ENCODE measurements at regions of chr3 and their contacts with region 1.

Region 1: DNA sequence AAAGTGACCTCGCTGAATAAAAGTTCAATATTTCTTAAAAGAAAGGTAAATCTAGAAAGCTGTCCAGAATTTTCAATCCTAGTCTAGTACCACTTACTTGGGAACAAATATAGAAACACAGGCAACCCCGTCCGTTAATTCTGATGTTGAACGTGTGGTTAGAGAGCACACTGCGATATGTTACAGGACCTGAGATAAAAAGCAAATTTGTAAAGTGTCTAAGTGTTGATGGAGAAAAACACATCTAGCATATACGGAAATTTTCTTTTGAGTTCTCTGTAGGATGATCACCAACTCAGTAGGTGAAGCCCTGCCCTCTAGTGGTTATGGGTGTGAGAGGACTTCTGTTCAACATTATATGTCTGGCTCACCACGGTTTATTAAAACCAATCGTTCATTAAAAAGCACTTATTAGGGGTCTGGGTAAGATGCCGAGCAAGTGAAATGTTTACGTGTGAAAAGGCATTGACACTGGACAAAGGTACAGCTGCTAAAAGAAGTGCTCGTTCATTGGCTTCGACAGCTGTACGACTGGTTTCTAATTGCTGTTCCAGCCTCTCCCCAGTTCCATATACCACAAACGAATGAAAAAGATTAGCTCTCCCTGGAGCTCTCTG is 1.0 kb upstream of the ATP2C1 start:
- DNase-seq: peak; percentile 56
- H3K4me3 Mint-ChIP-seq: peak overlapping the region; percentile 93
- H3K27ac Mint-ChIP-seq: peak overlapping the region; percentile 97
- H3K4me1 Mint-ChIP-seq: peaks cover 35% of the 10 kb centered on the region
- H3K27me3 Mint-ChIP-seq: no peaks in the 10 kb centered on the region

Region 2: DNA sequence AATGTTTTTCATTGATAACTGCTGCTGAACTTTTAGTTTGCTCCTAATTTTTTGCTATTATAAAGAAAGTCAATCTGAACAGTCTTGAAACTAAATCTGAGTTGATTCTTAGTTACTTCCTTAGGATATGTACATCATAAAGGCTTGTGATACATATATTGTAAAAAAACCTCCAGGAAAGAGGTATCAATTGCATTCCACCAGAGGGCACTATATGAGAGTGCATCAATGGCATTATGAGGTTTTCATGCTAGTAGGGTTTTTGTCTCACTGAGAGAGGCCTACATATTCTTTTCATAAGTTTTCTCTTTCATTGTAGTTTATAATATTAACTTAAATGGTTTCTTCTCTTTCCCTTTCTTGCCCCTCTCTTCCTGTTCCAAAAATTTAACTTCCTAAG is 193.1 kb before region 1 on chr3:
- intact Hi-C with region 1: loop called (anchors 1 kb)
- DNase-seq: no peak
- H3K4me3 Mint-ChIP-seq: no peak overlapping the region
- H3K27ac Mint-ChIP-seq: no peak overlapping the region
- H3K4me1 Mint-ChIP-seq: no peaks in the 10 kb centered on the region
- H3K27me3 Mint-ChIP-seq: no peaks in the 10 kb centered on the region

Region 3: GRCh38 chr3:130759699-130760338 is 133.0 kb before region 1 on chr3:
- intact Hi-C with region 1: loop called (anchors 1 kb)
- DNase-seq: peak; percentile 33
- H3K4me3 Mint-ChIP-seq: no peak overlapping the region
- H3K27ac Mint-ChIP-seq: no peak overlapping the region
- H3K4me1 Mint-ChIP-seq: peaks cover 17% of the 10 kb centered on the region
- H3K27me3 Mint-ChIP-seq: peaks cover 3% of the 10 kb centered on the region

Region 4: DNA sequence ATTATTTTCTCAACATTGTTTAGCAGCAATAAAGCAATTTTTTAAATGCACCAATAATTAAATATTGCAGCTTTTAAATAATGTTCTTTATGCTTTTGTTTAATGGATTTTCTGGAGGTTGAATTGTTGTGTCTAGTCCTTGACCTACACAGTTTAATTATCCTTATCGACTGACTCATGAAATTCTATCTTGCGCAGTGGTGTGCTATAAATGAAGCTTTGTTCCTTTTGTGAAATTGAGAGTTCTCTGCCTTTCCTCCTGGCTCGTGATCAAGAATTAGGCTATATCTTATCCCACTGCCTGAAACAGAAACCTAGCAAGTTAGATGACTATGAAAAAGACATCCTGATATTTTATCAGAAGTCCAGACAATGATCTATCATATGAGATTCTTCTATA is 109.2 kb before region 1 on chr3:
- intact Hi-C with region 1: no loop called
- DNase-seq: no peak
- H3K4me3 Mint-ChIP-seq: no peak overlapping the region
- H3K27ac Mint-ChIP-seq: no peak overlapping the region
- H3K4me1 Mint-ChIP-seq: no peaks in the 10 kb centered on the region
- H3K27me3 Mint-ChIP-seq: peaks cover 22% of the 10 kb centered on the region

Region 5: DNA sequence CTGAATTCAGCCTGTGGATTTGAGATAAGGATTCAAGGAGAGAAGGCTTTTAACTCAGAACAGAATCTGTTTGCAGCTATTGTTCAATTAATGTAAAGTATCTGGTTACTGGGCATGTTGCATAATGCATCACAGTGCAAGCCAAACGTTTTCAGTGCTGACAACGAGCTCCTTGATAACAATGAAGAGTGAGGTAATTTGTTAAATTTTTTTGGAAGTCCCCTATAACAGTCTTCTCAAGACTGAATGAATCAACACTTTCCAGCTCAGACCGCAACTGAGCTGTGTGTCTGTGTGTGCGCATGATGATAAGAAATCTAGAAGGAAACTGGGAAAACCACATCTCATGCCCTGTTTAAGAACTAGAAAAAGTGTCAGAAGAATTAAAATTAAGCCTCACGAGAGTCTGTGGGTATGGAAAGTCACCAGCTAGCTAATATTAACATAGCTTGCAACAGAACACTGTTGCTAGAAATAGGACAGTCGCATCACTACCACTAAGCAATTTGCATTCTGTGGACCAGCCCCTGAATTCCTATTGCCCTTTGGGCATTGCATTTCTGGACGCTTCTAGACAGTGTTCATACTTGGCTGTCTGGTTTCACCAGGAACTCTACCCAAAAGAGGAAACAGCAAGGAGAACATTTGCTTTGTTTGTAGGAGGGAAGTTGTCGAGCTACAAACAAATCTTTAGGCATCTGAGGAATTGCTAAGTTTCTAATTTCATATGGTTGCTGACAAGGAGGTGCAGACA is 42.6 kb before region 1 on chr3:
- intact Hi-C with region 1: loop called (anchors 1 kb)
- DNase-seq: peak; percentile 54
- H3K4me3 Mint-ChIP-seq: peak overlapping the region; percentile 28
- H3K27ac Mint-ChIP-seq: peak overlapping the region; percentile 71
- H3K4me1 Mint-ChIP-seq: peaks cover 33% of the 10 kb centered on the region
- H3K27me3 Mint-ChIP-seq: peaks cover 15% of the 10 kb centered on the region

Region 6: DNA sequence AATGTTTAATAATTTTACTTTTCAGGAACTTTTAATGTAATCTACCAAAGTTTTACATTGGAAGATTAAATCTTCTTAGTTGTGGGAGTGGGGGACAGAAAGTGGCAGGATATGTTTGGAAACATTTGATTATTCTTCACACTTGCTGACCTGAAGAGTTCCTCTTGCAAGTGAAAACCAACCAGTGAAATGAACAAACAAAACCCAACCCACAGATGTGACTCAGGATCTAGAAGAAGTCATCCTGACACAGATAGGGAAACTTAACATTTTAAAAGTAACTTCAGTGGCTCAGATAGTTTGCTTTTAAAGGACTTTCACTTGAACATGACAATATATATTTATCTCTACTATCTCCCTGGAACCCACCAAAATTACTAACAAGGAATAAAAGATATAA is 78.3 kb after region 1 on chr3:
- intact Hi-C with region 1: loop called (anchors 1 kb)
- DNase-seq: no peak
- H3K4me3 Mint-ChIP-seq: no peak overlapping the region
- H3K27ac Mint-ChIP-seq: peak overlapping the region; percentile 18
- H3K4me1 Mint-ChIP-seq: peaks cover 12% of the 10 kb centered on the region
- H3K27me3 Mint-ChIP-seq: no peaks in the 10 kb centered on the region

Region 7: GRCh38 chr3:131381444-131382291 is 488.8 kb after region 1 on chr3 and contains the start of gene NUDT16:
- intact Hi-C with region 1: loop called (anchors 10 kb)
- DNase-seq: peak; percentile 97
- H3K4me3 Mint-ChIP-seq: peak within 1 kb of the TSS; percentile 96
- H3K27ac Mint-ChIP-seq: peak within 1 kb of the TSS; percentile 94
- H3K4me1 Mint-ChIP-seq: peaks cover 41% of the 10 kb centered on the region
- H3K27me3 Mint-ChIP-seq: no peaks in the 10 kb centered on the region
- total RNA-seq, gene NUDT16: 10.2 TPM in 2 replicates

Measured in activated T-helper 2 cell treated with anti-CD3 and anti-CD28 coated beads, Interferon-gamma antibody, Interleukin-2, Interleukin-4, amounts not matched to agents 10 μg/mL and 5 μg/mL and 100 μg/mL, durations not matched to agents 14 hours and 24 hours and 36 hours (primary cell).